ENCODE measurements at regions of chr6 and their contacts with region 1.

Region 1: GRCh38 chr6:15299430-15300131 is 53.7 kb downstream of the JARID2 start:
- DNase-seq: peak; percentile 46
- H3K4me3 Mint-ChIP-seq: no peak overlapping the region
- H3K27ac Mint-ChIP-seq: peak overlapping the region; percentile 50
- H3K4me1 Mint-ChIP-seq: peaks cover 79% of the 10 kb centered on the region
- H3K27me3 Mint-ChIP-seq: no peaks in the 10 kb centered on the region

Region 2: GRCh38 chr6:14743465-14744211 is 555.9 kb before region 1 on chr6:
- CTCF ChIA-PET with region 1: no interaction called
- POLR2A ChIA-PET with region 1: no interaction called
- intact Hi-C with region 1: loop called (anchors 2 kb)
- DNase-seq: peak; percentile 93
- H3K4me3 Mint-ChIP-seq: peak overlapping the region; percentile 58
- H3K27ac Mint-ChIP-seq: peak overlapping the region; percentile 98
- H3K4me1 Mint-ChIP-seq: peaks cover 83% of the 10 kb centered on the region
- H3K27me3 Mint-ChIP-seq: no peaks in the 10 kb centered on the region

Region 3: GRCh38 chr6:15254070-15254841 is 45.3 kb before region 1 on chr6:
- CTCF ChIA-PET with region 1: interaction called, 3 read pairs
- POLR2A ChIA-PET with region 1: no interaction called
- intact Hi-C with region 1: loop called (anchors 1 kb)
- DNase-seq: no peak
- H3K4me3 Mint-ChIP-seq: peak overlapping the region; percentile 96
- H3K27ac Mint-ChIP-seq: peak overlapping the region; percentile 98
- H3K4me1 Mint-ChIP-seq: peaks cover 93% of the 10 kb centered on the region
- H3K27me3 Mint-ChIP-seq: no peaks in the 10 kb centered on the region

Region 4: GRCh38 chr6:15317934-15318902 is 18.6 kb after region 1 on chr6:
- CTCF ChIA-PET with region 1: no interaction called
- POLR2A ChIA-PET with region 1: no interaction called
- intact Hi-C with region 1: loop called (anchors 1 kb)
- DNase-seq: peak; percentile 55
- H3K4me3 Mint-ChIP-seq: peak overlapping the region; percentile 20
- H3K27ac Mint-ChIP-seq: peak overlapping the region; percentile 67
- H3K4me1 Mint-ChIP-seq: peaks cover 96% of the 10 kb centered on the region
- H3K27me3 Mint-ChIP-seq: no peaks in the 10 kb centered on the region

Region 5: GRCh38 chr6:15389084-15389764 is 89.6 kb after region 1 on chr6:
- CTCF ChIA-PET with region 1: no interaction called
- POLR2A ChIA-PET with region 1: no interaction called
- intact Hi-C with region 1: no loop called
- DNase-seq: no peak
- H3K4me3 Mint-ChIP-seq: no peak overlapping the region
- H3K27ac Mint-ChIP-seq: no peak overlapping the region
- H3K4me1 Mint-ChIP-seq: peaks cover 81% of the 10 kb centered on the region
- H3K27me3 Mint-ChIP-seq: no peaks in the 10 kb centered on the region

Region 6: DNA sequence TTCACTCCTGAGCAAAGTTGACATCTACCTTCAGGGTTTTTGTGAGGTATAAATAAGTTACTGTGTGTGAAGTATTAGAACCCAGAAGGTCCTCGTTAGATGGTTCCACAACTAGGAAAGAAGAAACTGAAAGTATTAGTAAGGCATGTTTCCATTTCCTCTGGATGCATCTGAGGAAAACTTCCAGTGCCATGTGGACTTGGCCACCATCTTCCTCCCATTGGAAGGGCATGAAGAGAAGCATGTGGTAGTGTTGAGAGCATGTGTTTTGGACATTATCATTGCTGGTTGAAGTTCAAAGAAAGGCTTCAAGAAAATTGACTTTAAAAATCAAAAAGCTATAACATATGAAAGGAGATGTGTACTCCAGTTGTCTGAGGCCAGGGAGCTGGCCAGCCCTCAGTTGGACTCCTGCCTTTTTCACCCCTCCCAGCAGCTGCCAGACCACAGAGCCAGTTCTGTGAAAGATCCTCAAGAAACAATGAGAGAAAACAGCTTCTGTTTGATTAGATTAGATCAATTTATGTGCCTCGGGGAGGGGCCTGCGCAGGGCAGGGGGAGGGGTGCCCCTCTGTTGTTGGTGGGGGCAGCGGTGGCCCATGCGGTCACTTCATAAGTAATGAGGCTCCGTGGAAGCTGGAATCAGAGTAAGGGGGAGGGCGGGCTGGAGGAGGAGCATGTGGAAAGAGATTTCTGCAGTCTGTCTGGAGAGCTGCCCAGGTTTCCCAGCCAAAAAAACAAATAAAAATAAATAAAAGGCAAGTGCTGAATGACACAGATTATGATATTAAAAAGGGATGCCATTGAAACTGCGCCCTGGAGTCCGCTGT is 100.3 kb after region 1 on chr6:
- CTCF ChIA-PET with region 1: no interaction called
- POLR2A ChIA-PET with region 1: no interaction called
- intact Hi-C with region 1: loop called (anchors 5 kb)
- DNase-seq: no peak
- H3K4me3 Mint-ChIP-seq: peak overlapping the region; percentile 53
- H3K27ac Mint-ChIP-seq: peak overlapping the region; percentile 10
- H3K4me1 Mint-ChIP-seq: peaks cover 83% of the 10 kb centered on the region
- H3K27me3 Mint-ChIP-seq: no peaks in the 10 kb centered on the region